KBM-7 (cell line): ENCODE measurements at regions of chr7 and their contacts with region 1.

Region 1: DNA sequence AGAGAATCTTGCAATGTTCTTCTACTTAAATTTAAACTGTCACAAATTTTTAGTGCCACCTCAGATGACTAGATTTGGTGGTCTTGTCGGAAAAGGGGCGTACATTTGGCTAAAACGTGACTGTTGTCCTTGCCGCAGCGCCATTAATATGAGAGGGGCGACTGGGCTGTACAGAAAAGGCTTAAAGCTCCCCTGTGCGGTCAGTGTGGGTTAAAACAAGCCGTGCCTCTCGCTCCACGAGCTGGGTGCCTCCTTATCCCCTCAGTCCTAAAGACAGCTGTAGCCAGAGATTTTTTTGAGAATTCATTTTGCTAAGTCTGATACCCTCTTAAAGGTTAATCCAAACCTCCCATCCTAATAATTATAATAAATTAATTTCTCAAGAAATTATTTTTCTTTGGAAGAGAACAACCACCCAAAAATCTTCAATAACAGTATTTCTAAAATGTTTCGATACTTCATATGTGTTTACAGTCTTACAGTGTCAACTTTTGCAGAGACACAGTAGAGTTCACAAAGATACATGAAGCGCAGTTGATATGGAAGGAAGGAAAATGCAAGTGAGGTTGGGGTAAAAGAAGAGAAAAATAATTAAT is 68.6 kb downstream of the C7orf25 start:
- DNase-seq: peak; percentile 56

Region 2: GRCh38 chr7:41955893-41956675 is 887.2 kb before region 1 on chr7:
- in situ Hi-C with region 1: loop called (anchors 25 kb)
- DNase-seq: peak; percentile 93